Activated T-helper 1 cell treated with anti-CD3 and anti-CD28 coated beads, Interleukin-12 subunit alpha, Interleukin-12 subunit beta, Interleukin-2, Interleukin-4 antibody, amounts not matched to agents 30 ng/mL and 10 ng/mL and 1 ng/mL, durations not matched to agents 14 hours and 24 hours and 36 hours (primary cell): ENCODE measurements at regions of chr20 and their contacts with region 1.

Region 1: DNA sequence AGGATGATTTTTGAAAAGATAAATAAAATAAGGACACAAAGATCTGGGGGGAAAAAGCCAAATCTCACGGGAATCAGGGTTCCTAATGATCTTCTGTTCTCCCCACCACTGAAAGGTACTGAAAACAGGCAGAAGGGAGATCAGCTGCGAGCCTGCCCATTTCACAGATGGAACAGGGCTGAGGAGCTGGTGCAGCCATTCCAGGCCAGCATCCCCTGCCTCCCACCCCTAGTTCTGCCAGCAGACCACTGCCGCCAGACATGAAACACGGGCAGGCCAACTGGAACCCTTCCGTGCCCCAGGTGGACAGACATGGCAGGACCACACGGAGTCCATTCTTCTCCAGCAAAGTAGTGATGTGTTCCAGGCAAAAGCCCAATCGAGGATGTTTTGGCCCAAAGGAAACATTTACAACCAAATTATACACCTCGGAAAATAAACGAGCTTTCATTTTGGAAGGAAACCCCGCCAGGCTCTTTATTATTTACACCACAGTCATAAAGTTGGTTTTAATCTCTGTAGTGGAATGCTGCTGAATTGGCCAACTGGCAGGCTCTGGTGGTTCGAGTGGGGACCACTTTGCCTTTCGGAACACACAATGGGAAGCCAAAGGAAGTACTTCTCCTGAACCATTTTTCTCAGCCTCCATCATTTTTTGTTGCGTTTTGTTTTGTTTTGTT is 28.2 kb downstream of the ISM1 start:
- DNase-seq: no peak
- H3K4me3 Mint-ChIP-seq: no peak overlapping the region
- H3K27ac Mint-ChIP-seq: no peak overlapping the region
- H3K4me1 Mint-ChIP-seq: peaks cover 36% of the 10 kb centered on the region
- H3K27me3 Mint-ChIP-seq: peaks cover 6% of the 10 kb centered on the region

Region 2: GRCh38 chr20:12970372-12970821 is 278.9 kb before region 1 on chr20:
- intact Hi-C with region 1: no loop called
- DNase-seq: no peak
- H3K4me3 Mint-ChIP-seq: no peak overlapping the region
- H3K27ac Mint-ChIP-seq: no peak overlapping the region
- H3K4me1 Mint-ChIP-seq: no peaks in the 10 kb centered on the region
- H3K27me3 Mint-ChIP-seq: no peaks in the 10 kb centered on the region

Region 3: DNA sequence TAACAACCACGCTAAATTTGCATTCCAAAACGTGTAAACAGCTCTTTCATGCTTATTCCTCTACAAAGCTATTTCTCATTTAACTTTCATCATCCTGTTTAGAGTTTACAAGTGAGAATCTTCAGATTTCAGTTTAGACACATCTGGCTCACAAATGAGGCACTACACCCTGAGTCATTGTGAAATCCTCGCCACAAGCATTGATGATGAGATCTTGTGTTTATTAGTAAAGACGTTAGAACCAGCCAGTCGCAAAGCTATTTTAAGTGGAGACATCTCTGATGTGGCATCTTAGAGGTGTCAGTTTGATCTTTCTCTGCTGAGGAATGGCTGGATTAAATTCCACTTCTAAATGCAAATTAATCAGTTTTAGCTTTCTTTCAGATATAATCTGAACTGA is 36.5 kb before region 1 on chr20:
- intact Hi-C with region 1: loop called (anchors 5 kb)
- DNase-seq: no peak
- H3K4me3 Mint-ChIP-seq: no peak overlapping the region
- H3K27ac Mint-ChIP-seq: no peak overlapping the region
- H3K4me1 Mint-ChIP-seq: peaks cover 6% of the 10 kb centered on the region
- H3K27me3 Mint-ChIP-seq: peaks cover 51% of the 10 kb centered on the region

Region 4: GRCh38 chr20:13336308-13337089 is 87.2 kb after region 1 on chr20:
- intact Hi-C with region 1: loop called (anchors 5 kb)
- DNase-seq: no peak
- H3K4me3 Mint-ChIP-seq: no peak overlapping the region
- H3K27ac Mint-ChIP-seq: no peak overlapping the region
- H3K4me1 Mint-ChIP-seq: peaks cover 36% of the 10 kb centered on the region
- H3K27me3 Mint-ChIP-seq: no peaks in the 10 kb centered on the region

Region 5: GRCh38 chr20:13430346-13431002 is 181.2 kb after region 1 on chr20:
- intact Hi-C with region 1: loop called (anchors 5 kb)
- DNase-seq: peak; percentile 6
- H3K4me3 Mint-ChIP-seq: peak overlapping the region; percentile 1
- H3K27ac Mint-ChIP-seq: peak overlapping the region; percentile 16
- H3K4me1 Mint-ChIP-seq: peaks cover 25% of the 10 kb centered on the region
- H3K27me3 Mint-ChIP-seq: no peaks in the 10 kb centered on the region

Region 6: DNA sequence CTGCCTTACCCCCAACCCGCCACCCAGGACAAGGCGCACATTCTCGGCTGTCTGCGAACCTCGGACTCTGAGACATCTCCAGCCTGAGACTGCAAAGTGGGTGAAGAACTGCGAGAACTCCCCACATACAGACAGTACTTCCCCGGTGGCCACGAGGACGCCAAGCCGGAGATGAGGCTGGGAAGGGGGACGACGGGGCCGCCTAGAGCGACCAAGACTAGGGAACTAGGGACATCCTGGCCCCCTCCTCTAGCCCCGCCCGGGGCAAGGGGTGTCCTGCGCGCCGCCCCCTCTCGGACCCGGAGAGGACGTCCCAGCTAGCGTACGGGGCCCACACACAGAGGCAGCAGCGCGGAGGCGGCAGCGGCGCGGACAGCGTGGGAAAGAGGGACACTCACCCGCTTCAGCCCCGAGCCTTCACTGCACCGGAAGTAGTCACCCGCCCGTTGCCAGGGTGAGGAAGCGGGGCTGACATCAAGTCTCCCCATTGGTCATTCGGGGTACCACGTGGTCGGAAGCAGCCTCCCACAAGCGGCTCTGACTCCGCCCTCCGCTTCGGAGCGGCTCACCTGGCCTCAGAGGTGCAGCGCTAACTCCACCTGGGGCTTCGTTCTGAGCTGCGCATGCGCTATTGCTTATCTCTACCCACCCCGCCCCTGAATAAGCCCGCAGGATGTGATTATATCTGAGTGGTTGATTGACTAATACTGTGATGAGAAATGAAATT is 389.4 kb after region 1 on chr20 and contains the start of gene TASP1:
- intact Hi-C with region 1: loop called (anchors 5 kb)
- DNase-seq: peak; percentile 91
- H3K4me3 Mint-ChIP-seq: peak within 1 kb of the TSS; percentile 97
- H3K27ac Mint-ChIP-seq: peak within 1 kb of the TSS; percentile 71
- H3K4me1 Mint-ChIP-seq: peaks cover 30% of the 10 kb centered on the region
- H3K27me3 Mint-ChIP-seq: peaks cover 11% of the 10 kb centered on the region
- total RNA-seq, gene TASP1: 13.8 and 14.8 TPM in 2 replicates